ENCODE measurements at regions of chr9 and their contacts with region 1.

Region 1: GRCh38 chr9:73200694-73201452 is 49.2 kb downstream of the ANXA1 start:
- DNase-seq: peak; percentile 44
- H3K4me3 Mint-ChIP-seq: no peak overlapping the region
- H3K27ac Mint-ChIP-seq: no peak overlapping the region
- H3K4me1 Mint-ChIP-seq: no peaks in the 10 kb centered on the region
- H3K27me3 Mint-ChIP-seq: peaks cover 82% of the 10 kb centered on the region
- CTCF ChIP-seq: peak; percentile 43

Region 2: GRCh38 chr9:73210886-73211666 is 10.2 kb after region 1 on chr9:
- CTCF ChIA-PET with region 1: interaction called, 22 read pairs
- POLR2A ChIA-PET with region 1: interaction called, 3 read pairs
- intact Hi-C with region 1: no loop called
- DNase-seq: no peak
- H3K4me3 Mint-ChIP-seq: no peak overlapping the region
- H3K27ac Mint-ChIP-seq: no peak overlapping the region
- H3K4me1 Mint-ChIP-seq: no peaks in the 10 kb centered on the region
- H3K27me3 Mint-ChIP-seq: peaks cover 90% of the 10 kb centered on the region
- CTCF ChIP-seq: no peak

Region 3: GRCh38 chr9:73269430-73270101 is 68.7 kb after region 1 on chr9:
- CTCF ChIA-PET with region 1: interaction called, 17 read pairs
- POLR2A ChIA-PET with region 1: no interaction called
- intact Hi-C with region 1: no loop called
- DNase-seq: peak; percentile 44
- H3K4me3 Mint-ChIP-seq: no peak overlapping the region
- H3K27ac Mint-ChIP-seq: no peak overlapping the region
- H3K4me1 Mint-ChIP-seq: peaks cover 8% of the 10 kb centered on the region
- H3K27me3 Mint-ChIP-seq: peaks cover 58% of the 10 kb centered on the region
- CTCF ChIP-seq: peak; percentile 36

Region 4: GRCh38 chr9:73667717-73668116 is 466.8 kb after region 1 on chr9:
- CTCF ChIA-PET with region 1: interaction called, 7 read pairs
- POLR2A ChIA-PET with region 1: no interaction called
- intact Hi-C with region 1: loop called (anchors 5 kb)
- DNase-seq: peak; percentile 27
- H3K4me3 Mint-ChIP-seq: no peak overlapping the region
- H3K27ac Mint-ChIP-seq: no peak overlapping the region
- H3K4me1 Mint-ChIP-seq: no peaks in the 10 kb centered on the region
- H3K27me3 Mint-ChIP-seq: peaks cover 68% of the 10 kb centered on the region
- CTCF ChIP-seq: peak; percentile 38

Region 5: DNA sequence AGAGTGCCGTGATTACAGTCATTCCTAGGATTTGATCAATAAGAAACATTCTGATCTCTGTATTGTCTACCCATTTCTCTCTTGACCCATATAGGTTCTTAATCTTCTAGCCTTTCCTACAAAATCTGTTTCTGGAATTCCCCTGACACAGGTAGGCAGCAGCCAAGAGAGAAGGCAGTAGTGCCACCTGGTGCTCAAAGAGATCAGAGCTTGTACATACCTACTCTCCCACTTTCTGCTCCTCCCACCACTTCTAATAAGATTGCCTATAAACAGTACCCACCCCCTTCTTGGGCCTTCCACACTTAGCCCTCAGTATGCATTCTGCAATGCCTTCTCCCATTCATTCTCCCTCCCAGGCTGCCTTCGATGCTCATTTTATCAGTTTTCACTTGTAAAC is 1178.8 kb after region 1 on chr9:
- CTCF ChIA-PET with region 1: interaction called, 29 read pairs
- POLR2A ChIA-PET with region 1: no interaction called
- intact Hi-C with region 1: loop called (anchors 2 kb)
- DNase-seq: peak; percentile 69
- H3K4me3 Mint-ChIP-seq: no peak overlapping the region
- H3K27ac Mint-ChIP-seq: no peak overlapping the region
- H3K4me1 Mint-ChIP-seq: no peaks in the 10 kb centered on the region
- H3K27me3 Mint-ChIP-seq: peaks cover 26% of the 10 kb centered on the region
- CTCF ChIP-seq: peak; percentile 43

Region 6: GRCh38 chr9:74742792-74743730 is 1542.2 kb after region 1 on chr9:
- CTCF ChIA-PET with region 1: interaction called, 4 read pairs
- POLR2A ChIA-PET with region 1: no interaction called
- intact Hi-C with region 1: loop called (anchors 2 kb)
- DNase-seq: peak; percentile 41
- H3K4me3 Mint-ChIP-seq: no peak overlapping the region
- H3K27ac Mint-ChIP-seq: no peak overlapping the region
- H3K4me1 Mint-ChIP-seq: peaks cover 5% of the 10 kb centered on the region
- H3K27me3 Mint-ChIP-seq: peaks cover 64% of the 10 kb centered on the region
- CTCF ChIP-seq: peak; percentile 81